CD14-positive monocyte (primary cell): ENCODE measurements at regions of chr7 and their contacts with region 1.

Region 1: DNA sequence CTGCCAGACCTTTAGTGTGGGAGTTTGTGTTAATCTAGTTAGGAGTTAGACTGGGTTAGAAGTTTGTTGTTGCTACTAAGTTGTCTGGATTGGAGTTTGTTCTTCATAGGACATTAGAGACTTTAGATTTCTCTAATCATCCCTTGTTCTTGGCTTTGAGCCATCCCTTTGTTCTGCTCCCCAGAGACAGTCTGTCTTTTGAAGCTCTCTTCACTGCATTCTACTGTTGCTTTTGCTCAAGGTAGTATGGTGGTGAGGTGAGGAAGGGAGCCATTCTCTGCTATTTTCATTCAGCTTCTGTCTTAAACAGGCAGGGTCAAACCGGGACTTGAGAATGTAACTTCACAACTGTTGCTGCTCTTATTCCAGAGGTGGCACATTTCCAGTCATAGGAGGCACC is 10.4 kb upstream of the TARP start:
- DNase-seq: no peak
- H3K4me3 ChIP-seq: no peak overlapping the region
- H3K4me3 Mint-ChIP-seq: no peak overlapping the region
- H3K27ac ChIP-seq: no peak overlapping the region
- H3K27ac Mint-ChIP-seq: no peak overlapping the region
- H3K4me1 ChIP-seq: peaks cover 16 to 42% of the 10 kb centered on the region in 2 donors
- H3K4me1 Mint-ChIP-seq: peaks cover 51% of the 10 kb centered on the region
- H3K27me3 ChIP-seq: no peaks in the 10 kb centered on the region
- H3K27me3 Mint-ChIP-seq: peaks cover 0 to 1% (median 0%) of the 10 kb centered on the region in 3 donors
- CTCF ChIP-seq: no peak

Region 2: DNA sequence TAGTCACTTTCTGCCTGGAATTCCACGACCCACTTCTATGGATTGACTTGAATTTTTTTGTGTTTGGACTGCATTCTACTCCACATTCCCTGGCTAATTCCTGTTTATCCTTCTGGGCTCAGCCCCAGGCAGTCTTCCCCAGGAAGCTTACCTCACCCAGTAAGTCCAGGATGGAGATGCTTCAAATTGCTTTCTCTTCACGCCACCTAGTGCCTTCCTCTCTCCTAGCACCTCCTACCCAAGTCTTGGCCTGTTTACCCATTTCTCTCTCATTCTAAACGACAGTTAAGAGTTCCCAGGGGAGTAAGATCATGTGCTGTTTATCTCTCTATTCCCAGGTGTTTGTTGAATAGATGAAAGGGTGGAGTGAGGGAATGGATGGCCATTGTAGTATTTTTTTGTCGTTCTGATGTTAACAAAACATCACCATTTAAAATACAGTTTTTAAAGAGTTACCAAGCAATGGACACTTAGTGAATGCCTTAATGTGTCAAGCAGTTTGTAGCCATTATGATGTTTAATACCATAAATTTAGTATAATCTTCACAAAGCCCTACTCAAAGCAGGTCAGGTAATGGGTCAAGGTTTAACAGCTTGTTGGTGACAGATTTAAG is 35.1 kb after region 1 on chr7:
- intact Hi-C with region 1: loop called in 1 of 2 experiments (anchors 5 kb)
- DNase-seq: peak in 2 of 3 donors; percentile 33 to 57
- H3K4me3 ChIP-seq: peak overlapping the region in 1 of 3 experiments; percentile 42
- H3K4me3 Mint-ChIP-seq: peak overlapping the region in 1 of 2 donors; percentile 68
- H3K27ac ChIP-seq: peak overlapping the region in 1 of 2 donors; percentile 47
- H3K27ac Mint-ChIP-seq: peak overlapping the region in 6 of 7 donors; percentile 8 to 91 (median 76)
- H3K4me1 ChIP-seq: peaks cover 21% of the 10 kb centered on the region in 2 donors
- H3K4me1 Mint-ChIP-seq: peaks cover 24% of the 10 kb centered on the region
- H3K27me3 ChIP-seq: no peaks in the 10 kb centered on the region
- H3K27me3 Mint-ChIP-seq: peaks cover 0 to 3% (median under 1%) of the 10 kb centered on the region in 3 donors
- CTCF ChIP-seq: peak; percentile 72